ENCODE measurements at regions of chr16 and their contacts with region 1.

Region 1: DNA sequence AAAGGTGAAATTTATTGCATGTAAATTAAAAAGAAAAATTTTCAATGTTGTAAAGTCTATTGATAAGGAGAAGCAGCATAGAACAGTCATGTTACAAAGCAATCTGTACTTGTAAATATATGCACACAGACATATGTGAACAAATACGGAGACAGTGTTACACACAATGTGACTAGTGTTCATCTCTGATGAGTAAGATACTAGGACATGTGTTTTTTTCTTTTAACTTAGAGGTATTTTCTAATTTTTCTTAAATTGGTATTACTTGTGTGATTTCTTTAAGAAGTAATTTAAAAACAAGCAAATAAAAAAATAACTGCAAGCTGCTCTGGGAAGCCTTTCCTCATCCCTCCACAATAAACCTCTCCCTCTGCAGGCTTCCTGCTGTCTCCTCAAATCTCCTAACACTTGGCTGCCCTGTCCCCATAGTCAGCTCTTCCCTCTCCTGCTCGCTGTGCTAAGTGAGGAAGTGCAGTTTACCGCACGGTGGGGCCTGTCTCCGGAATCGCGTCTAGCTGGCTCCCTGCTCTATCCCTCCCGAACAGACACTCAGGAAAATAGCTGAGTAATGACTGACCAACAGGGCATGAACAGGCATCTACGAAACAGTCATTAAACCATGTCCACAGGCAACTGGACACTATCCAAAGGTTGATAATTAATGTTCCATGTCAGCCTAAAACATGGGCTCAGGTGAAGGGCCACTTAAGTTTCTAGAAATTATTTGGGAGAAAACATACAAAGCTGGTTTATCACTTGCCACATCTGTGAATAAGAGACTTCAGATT is 35.9 kb downstream of the CMTM4 start:
- DNase-seq: peak; percentile 74
- H3K4me3 Mint-ChIP-seq: peak overlapping the region; percentile 34
- H3K27ac Mint-ChIP-seq: peak overlapping the region; percentile 78
- H3K4me1 Mint-ChIP-seq: peaks cover 25% of the 10 kb centered on the region
- H3K27me3 Mint-ChIP-seq: no peaks in the 10 kb centered on the region
- CTCF ChIP-seq: no peak

Region 2: GRCh38 chr16:65570261-65570660 is 1090.4 kb before region 1 on chr16:
- CTCF ChIA-PET with region 1: no interaction called
- POLR2A ChIA-PET with region 1: no interaction called
- intact Hi-C with region 1: no loop called
- DNase-seq: no peak
- H3K4me3 Mint-ChIP-seq: no peak overlapping the region
- H3K27ac Mint-ChIP-seq: no peak overlapping the region
- H3K4me1 Mint-ChIP-seq: no peaks in the 10 kb centered on the region
- H3K27me3 Mint-ChIP-seq: no peaks in the 10 kb centered on the region
- CTCF ChIP-seq: no peak

Region 3: GRCh38 chr16:66618588-66619375 is 41.8 kb before region 1 on chr16:
- CTCF ChIA-PET with region 1: interaction called, 9 read pairs
- POLR2A ChIA-PET with region 1: interaction called, 29 read pairs
- intact Hi-C with region 1: no loop called
- DNase-seq: peak; percentile 96
- H3K4me3 Mint-ChIP-seq: peak overlapping the region; percentile 47
- H3K27ac Mint-ChIP-seq: peak overlapping the region; percentile 75
- H3K4me1 Mint-ChIP-seq: peaks cover 32% of the 10 kb centered on the region
- H3K27me3 Mint-ChIP-seq: no peaks in the 10 kb centered on the region
- CTCF ChIP-seq: no peak

Region 4: DNA sequence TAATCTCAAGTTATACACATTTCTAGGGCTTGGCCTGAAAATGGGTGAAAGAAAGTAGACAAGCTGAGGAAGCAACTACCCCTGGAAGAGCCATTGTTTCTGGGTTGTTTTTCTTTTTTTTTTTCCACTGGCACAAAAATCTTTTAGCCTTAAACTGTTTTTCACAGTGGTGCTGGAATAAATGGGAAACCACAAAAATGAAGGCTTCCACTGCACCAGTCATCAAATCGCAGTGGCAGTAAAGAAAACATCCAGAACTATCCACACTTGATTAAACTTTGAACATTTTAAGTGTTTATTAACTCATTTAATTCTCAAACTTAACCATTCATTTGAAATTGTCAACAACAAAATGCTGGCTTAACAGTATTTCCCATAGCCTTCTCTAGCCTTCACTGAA is 21.7 kb after region 1 on chr16:
- CTCF ChIA-PET with region 1: interaction called, 14 read pairs
- POLR2A ChIA-PET with region 1: interaction called, 4 read pairs
- intact Hi-C with region 1: no loop called
- DNase-seq: no peak
- H3K4me3 Mint-ChIP-seq: no peak overlapping the region
- H3K27ac Mint-ChIP-seq: no peak overlapping the region
- H3K4me1 Mint-ChIP-seq: peaks cover 7% of the 10 kb centered on the region
- H3K27me3 Mint-ChIP-seq: no peaks in the 10 kb centered on the region
- CTCF ChIP-seq: no peak

Region 5: DNA sequence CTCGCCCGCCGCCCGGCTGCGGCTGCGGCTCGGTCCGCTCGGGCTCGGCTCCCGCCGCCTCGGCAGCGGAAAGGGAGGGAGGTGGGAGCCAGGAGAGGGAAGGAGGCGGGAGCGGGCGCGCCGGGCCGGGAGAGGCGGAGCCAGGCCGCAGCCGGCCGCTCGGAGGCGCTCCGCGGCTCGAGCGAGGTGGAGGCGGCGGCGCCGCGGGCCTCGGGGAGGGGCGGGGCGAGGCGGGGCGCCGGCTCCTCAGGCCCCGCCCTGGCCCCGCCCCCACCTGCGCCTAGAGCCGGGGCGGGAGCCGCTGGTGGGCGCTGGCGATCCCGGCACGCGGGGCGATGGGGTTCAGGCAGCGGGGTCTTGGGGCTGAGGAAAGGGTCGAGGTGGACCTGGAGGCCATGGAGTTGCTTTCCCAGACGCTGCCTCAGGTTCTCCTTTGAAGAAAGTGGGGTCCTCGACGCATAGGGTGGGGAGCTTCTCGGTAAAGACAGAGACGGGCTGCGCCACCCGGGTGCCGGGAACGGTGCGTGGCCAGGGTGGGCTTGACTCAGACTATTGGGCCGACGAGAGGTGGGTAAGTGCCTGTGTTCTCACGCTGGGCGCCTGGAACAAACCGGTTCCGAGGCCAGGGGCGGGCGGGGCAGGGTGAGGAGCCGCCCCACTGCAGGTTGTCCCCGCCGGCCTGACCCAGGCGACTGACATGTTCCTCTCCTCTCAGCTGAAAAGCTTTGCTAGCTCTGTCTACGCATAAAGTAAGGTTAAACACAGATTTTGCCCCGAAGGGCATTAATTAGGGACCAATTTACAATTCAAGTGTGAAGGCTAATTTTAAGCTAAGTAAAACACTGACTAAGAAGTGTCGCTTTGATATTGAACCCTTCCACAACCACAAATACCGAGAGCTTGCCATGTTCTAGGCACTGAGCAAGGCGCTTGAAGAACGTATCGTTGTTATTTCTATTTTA is 36.3 kb after region 1 on chr16 and contains the start of gene CMTM4:
- CTCF ChIA-PET with region 1: interaction called, 69 read pairs
- POLR2A ChIA-PET with region 1: interaction called, 18 read pairs
- intact Hi-C with region 1: loop called (anchors 2 kb)
- DNase-seq: peak; percentile 89
- H3K4me3 Mint-ChIP-seq: peak within 1 kb of the TSS; percentile 79
- H3K27ac Mint-ChIP-seq: peak within 1 kb of the TSS; percentile 69
- H3K4me1 Mint-ChIP-seq: peaks cover 14% of the 10 kb centered on the region
- H3K27me3 Mint-ChIP-seq: no peaks in the 10 kb centered on the region
- CTCF ChIP-seq: peak; percentile 12
- total RNA-seq, gene CMTM4: 27.2 and 36.7 TPM in 2 replicates

Region 6: GRCh38 chr16:66728117-66728787 is 67.6 kb after region 1 on chr16:
- CTCF ChIA-PET with region 1: interaction called, 68 read pairs
- POLR2A ChIA-PET with region 1: interaction called, 3 read pairs
- intact Hi-C with region 1: no loop called
- DNase-seq: peak; percentile 63
- H3K4me3 Mint-ChIP-seq: no peak overlapping the region
- H3K27ac Mint-ChIP-seq: no peak overlapping the region
- H3K4me1 Mint-ChIP-seq: peaks cover 7% of the 10 kb centered on the region
- H3K27me3 Mint-ChIP-seq: no peaks in the 10 kb centered on the region
- CTCF ChIP-seq: peak; percentile 53

Region 7: GRCh38 chr16:66751303-66751991 is 90.8 kb after region 1 on chr16 and contains the start of gene DYNC1LI2:
- CTCF ChIA-PET with region 1: interaction called, 12 read pairs
- POLR2A ChIA-PET with region 1: interaction called, 8 read pairs
- intact Hi-C with region 1: no loop called
- DNase-seq: peak; percentile 63
- H3K4me3 Mint-ChIP-seq: peak within 1 kb of the TSS; percentile 79
- H3K27ac Mint-ChIP-seq: peak within 1 kb of the TSS; percentile 92
- H3K4me1 Mint-ChIP-seq: peaks cover 30% of the 10 kb centered on the region
- H3K27me3 Mint-ChIP-seq: no peaks in the 10 kb centered on the region
- CTCF ChIP-seq: peak; percentile 83
- total RNA-seq, gene DYNC1LI2: 97.7 and 106 TPM in 2 replicates

Measured in MCF 10A (cell line).